Heart right ventricle (tissue), 16 donors: ENCODE measurements at regions of chr14 and their contacts with region 1.

Region 1: GRCh38 chr14:105617201-105617777 is 90.9 kb downstream of the TMEM121 start:
- DNase-seq: no peak
- ATAC-seq: peak in 6 of 8 donors; percentile 12 to 55 (median 32)
- H3K4me3 ChIP-seq: no peak overlapping the region
- H3K27ac ChIP-seq: no peak overlapping the region
- H3K4me1 ChIP-seq: peaks cover 0 to 4% (median 0%) of the 10 kb centered on the region in 9 donors
- H3K27me3 ChIP-seq: peaks cover 0 to 14% (median 0%) of the 10 kb centered on the region in 7 donors
- CTCF ChIP-seq: no peak

Region 2: DNA sequence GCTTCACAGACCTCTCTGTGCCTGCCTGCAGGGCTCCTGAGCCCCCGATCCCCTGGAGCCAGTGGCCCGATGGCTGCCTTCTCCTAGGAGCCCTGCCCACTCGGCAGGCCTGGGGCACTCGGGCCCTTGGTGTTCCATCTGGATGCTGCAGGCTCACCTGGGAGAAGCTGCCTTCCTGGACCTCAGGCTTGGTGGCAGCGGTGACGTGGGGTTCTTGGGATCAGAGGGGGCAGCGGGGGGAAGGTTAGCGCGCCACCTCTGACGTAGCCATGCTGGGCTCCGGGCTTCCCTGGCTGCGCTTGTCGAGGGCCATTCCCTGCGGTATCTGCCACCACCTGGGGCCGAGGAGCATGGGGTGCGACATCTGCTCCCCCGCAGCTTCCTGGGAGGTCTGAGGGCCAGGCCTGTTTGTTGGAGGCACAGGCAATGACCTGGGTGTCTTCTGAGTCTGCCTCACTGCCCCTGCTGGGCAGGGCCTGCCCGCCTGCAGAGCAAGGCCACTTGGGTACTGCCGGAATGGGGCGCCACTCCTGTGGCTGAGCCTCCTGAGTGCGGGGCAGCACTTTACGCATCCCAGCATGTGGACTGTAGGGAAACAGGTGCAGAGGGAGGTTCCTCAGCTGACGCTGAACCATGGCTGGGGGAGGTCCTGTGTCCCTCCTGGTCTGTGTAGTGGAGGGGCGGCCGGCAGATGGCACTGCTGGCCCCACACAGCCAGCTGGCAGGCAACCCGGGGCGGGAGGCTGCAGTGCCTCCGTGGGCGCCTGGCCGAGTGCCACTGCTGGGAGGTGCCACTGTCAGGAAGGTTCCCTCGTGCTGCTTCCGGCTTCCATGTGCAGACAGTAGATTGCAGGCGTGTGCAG is 177.4 kb before region 1 on chr14:
- intact Hi-C with region 1: no loop called
- DNase-seq: peak in 1 of 2 donors; percentile 21
- ATAC-seq: peak in 4 of 8 donors; percentile 22 to 39 (median 26)
- H3K4me3 ChIP-seq: no peak overlapping the region
- H3K27ac ChIP-seq: no peak overlapping the region
- H3K4me1 ChIP-seq: peaks cover 0 to 5% (median 0%) of the 10 kb centered on the region in 9 donors
- H3K27me3 ChIP-seq: no peaks in the 10 kb centered on the region
- CTCF ChIP-seq: peak in 1 of 9 donors; percentile 5

Region 3: GRCh38 chr14:105581551-105582341 is 35.5 kb before region 1 on chr14:
- intact Hi-C with region 1: no loop called
- DNase-seq: no peak
- ATAC-seq: no peak
- H3K4me3 ChIP-seq: no peak overlapping the region
- H3K27ac ChIP-seq: no peak overlapping the region
- H3K4me1 ChIP-seq: no peaks in the 10 kb centered on the region
- H3K27me3 ChIP-seq: no peaks in the 10 kb centered on the region
- CTCF ChIP-seq: no peak

Region 4: GRCh38 chr14:105632010-105632409 is 14.7 kb after region 1 on chr14:
- intact Hi-C with region 1: loop called in 1 of 10 experiments (anchors 2 kb)
- DNase-seq: no peak
- ATAC-seq: no peak
- H3K4me3 ChIP-seq: no peak overlapping the region
- H3K27ac ChIP-seq: no peak overlapping the region
- H3K4me1 ChIP-seq: no peaks in the 10 kb centered on the region
- H3K27me3 ChIP-seq: peaks cover 0 to 11% (median 0%) of the 10 kb centered on the region in 7 donors
- CTCF ChIP-seq: no peak

Region 5: GRCh38 chr14:105738261-105739037 is 121.2 kb after region 1 on chr14:
- intact Hi-C with region 1: loop called in 1 of 10 experiments (anchors 10 kb)
- DNase-seq: no peak
- ATAC-seq: peak in 4 of 8 donors; percentile 8 to 44 (median 22)
- H3K4me3 ChIP-seq: no peak overlapping the region
- H3K27ac ChIP-seq: no peak overlapping the region
- H3K4me1 ChIP-seq: no peaks in the 10 kb centered on the region
- H3K27me3 ChIP-seq: no peaks in the 10 kb centered on the region
- CTCF ChIP-seq: no peak

Region 6: DNA sequence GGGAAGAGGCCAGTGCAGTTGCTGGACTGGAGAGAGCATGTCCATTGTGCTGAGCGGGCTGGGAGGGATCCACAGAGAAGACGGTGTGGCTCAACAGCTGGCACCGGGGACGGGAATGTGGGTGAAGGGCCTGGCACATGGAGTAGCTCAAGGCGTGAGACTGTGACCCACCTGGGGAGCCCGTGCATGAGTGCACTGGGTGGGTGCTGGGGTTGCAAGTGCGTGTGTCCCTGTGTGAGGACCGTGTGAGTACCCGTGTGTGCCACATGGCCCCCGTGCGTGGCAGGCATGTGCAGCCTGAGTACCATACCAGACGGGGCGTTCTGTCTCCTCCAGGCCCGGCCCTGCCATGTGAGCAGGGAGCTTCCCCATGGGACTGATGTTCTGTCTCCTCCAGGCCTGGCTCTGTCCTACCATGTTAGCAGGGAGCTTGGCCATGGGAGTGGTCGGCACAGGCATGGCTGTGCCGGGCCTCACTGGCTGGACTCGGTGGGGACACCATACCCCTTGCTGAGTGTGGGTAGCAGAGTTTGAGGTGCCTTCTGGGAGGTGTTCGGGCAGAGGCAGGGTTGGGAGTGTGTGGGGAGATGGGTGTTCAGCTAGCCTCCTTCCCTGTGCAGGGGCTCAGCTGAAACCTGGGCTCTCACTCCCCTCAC is 143.5 kb after region 1 on chr14:
- intact Hi-C with region 1: loop called in 8 of 10 experiments (anchors 2 to 5 kb)
- DNase-seq: no peak
- ATAC-seq: peak in 1 of 8 donors; percentile 76
- H3K4me3 ChIP-seq: no peak overlapping the region
- H3K27ac ChIP-seq: no peak overlapping the region
- H3K4me1 ChIP-seq: no peaks in the 10 kb centered on the region
- H3K27me3 ChIP-seq: no peaks in the 10 kb centered on the region
- CTCF ChIP-seq: no peak